ENCODE measurements at regions of chr1 and their contacts with region 1.

Region 1: DNA sequence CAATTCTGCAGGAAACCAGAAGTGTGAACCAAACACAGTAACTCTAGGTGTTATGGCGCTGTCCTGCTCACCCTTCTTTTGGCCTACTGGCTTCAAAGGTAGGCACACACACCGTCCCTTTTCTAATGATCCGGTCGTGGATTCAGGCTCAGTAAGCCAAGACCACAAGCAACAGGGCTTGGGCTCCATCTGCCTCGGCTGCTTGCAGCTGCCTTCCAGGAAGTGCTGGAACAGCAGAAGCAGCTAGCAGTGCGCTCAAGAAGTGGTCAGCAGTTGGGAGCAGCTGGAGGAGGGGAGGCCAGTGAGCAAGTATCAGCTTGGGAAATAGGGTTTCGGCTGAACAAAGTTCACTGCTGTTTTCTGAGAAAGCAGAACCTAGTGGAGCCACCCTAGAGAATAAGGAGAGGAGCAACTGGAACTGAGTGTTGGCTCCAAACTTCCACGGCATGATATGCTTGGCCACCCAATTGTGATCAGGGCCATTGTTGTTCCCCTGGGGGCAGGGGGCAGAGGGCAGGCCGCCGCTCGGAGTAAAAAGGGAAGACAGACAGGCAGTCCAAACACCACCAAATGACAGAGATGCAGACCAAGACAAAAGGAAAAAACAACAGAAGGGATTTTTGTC is 173.4 kb downstream of the TOMM20 start:
- DNase-seq: peak; percentile 68 to 79
- ATAC-seq: peak; percentile 51 to 68 (median 64)
- H3K4me3 ChIP-seq: no peak overlapping the region
- H3K27ac ChIP-seq: peak overlapping the region; percentile 63
- H3K4me1 ChIP-seq: peaks cover 36% of the 10 kb centered on the region
- H3K27me3 ChIP-seq: no peaks in the 10 kb centered on the region
- CTCF ChIP-seq: no peak

Region 2: DNA sequence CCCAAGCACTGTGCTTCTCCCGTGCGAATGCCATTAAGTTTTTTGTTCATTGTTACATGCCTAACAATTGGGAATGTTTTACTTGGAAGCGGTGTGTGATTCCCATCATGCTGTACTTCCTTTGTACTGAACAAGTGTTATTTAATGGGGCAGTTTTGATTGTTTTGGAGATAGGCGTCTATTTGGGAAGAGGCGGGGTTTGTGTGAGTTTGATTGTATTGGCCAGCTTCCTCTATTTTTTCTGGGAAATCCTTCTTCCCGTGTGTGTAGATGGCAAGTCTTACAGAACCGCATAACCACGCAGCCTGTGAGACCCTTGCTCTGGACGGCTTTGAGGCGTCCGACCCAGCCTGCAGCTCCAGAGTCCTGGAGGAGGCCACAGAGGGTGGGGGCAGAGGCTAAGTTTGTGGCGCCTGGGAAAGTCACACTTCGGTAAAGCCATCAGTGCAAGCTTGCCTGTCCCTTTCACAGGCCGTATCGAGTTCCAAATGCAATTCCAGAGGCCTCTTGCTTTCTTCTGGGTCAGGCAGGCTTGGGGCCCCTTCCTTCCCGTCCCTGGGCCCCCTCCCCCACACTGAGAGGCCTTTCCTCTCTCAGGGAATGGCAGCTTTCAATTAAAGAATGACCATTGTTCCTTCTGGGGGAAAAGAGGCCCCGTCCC is 36.9 kb before region 1 on chr1:
- intact Hi-C with region 1: loop called in 1 of 2 experiments (anchors 5 kb)
- DNase-seq: peak in 1 of 2 donors; percentile 31
- ATAC-seq: peak; percentile 5 to 42 (median 22)
- H3K4me3 ChIP-seq: no peak overlapping the region
- H3K27ac ChIP-seq: peak overlapping the region; percentile 82
- H3K4me1 ChIP-seq: peaks cover 63% of the 10 kb centered on the region
- H3K27me3 ChIP-seq: no peaks in the 10 kb centered on the region
- CTCF ChIP-seq: no peak

Region 3: GRCh38 chr1:235050911-235051360 is 95.7 kb after region 1 on chr1:
- intact Hi-C with region 1: no loop called
- DNase-seq: no peak
- ATAC-seq: peak in 3 of 4 donors; percentile 10 to 53 (median 21)
- H3K4me3 ChIP-seq: no peak overlapping the region
- H3K27ac ChIP-seq: peak overlapping the region; percentile 11
- H3K4me1 ChIP-seq: peaks cover 24% of the 10 kb centered on the region
- H3K27me3 ChIP-seq: no peaks in the 10 kb centered on the region
- CTCF ChIP-seq: no peak